ENCODE measurements at regions of chr6 and their contacts with region 1.

Region 1: GRCh38 chr6:3139090-3139903 is 18.0 kb downstream of the TUBB2A start:
- DNase-seq: peak; percentile 85

Region 2: GRCh38 chr6:3205913-3206312 is 66.6 kb after region 1 on chr6:
- intact Hi-C with region 1: loop called in 1 of 2 experiments (anchors 1 kb)
- DNase-seq: no peak

Region 3: DNA sequence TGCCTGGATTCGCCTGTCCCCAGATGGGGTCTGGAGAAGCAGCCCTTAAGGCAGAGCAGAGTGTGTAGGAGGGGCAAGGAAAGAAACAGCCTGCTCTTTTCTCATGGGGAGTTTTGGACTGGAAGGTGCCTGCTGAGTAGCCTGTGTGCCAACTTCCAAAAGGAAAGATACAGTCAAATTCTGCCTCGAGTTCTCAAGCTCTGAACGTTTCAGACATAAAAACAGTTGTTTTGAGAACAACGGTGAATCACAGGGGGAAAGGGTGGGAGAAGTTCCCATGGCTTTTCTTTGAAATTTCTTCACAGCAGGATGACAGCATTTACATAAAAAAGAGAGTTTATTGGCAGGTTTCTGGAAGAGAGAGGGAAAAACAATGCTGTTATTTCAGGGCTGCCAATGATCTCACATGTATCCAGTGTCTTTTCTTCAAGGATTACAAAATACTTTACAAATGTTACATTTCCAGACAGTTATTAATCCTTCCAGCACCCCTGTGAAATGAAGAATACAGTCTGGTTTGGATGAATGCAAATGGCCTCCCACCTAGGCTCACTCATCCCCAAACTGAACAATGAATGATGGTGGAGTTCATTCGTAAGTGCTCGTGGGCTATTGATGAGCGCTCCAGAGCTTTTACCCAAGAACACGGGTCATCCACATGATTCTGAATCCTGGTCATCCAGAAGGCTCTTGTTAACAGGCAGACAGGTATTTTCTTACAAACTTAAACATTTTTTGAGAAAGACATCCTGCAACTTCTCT is 1029.9 kb after region 1 on chr6:
- intact Hi-C with region 1: loop called in 1 of 2 experiments (anchors 5 kb)
- DNase-seq: no peak

Measured in posterior vena cava (tissue), 2 donors.